Posterior vena cava (tissue), 2 donors: ENCODE measurements at regions of chr4 and their contacts with region 1.

Region 1: DNA sequence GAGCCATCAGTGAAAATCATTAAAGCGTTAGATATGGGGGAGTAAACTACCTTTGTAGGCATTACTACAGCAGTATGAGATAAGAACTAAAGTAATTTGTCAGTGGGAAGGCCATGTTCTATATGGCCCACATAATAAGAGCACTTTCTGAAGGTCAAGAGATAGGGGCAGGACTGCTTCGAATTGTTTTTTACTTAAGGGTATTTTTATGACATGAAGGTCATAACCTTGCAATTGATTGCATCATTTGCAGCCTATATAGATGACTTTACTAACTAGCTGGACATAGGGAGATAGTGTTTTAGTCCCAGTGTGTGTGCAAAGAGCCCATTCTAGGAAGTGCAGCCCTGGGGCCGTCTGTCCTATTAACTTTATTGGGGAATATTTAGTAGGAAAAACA is 23.6 kb upstream of the GC start:
- DNase-seq: no peak

Region 2: DNA sequence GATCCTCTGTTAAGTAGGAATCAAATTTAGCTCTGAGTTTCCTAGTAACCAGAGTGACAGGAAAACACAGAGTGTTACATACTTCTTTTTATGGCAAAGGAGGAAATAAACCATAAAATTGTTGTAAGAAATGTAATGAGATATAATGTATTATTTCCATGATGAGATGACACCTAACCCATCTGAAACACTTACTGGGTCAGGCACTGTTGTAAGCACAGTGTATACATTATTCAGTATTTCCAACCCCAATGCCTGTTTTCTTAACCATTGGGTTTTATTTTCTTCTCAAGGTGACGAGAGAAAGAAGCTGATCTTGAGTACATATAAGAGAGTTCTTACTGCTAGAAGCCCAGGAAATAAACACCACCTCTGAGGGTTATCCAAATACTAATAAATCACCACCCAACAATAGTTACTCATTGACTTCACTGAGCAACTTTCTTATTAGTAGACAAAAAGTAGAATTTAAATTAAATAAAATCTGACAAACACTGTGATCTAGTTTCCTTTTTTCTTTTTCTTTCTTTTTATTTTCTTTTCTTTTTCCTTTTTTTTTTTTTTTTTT is 1183.2 kb before region 1 on chr4:
- intact Hi-C with region 1: loop called in 1 of 2 experiments (anchors 5 kb)
- DNase-seq: no peak